ENCODE measurements at regions of chr17 and their contacts with region 1.

Region 1: GRCh38 chr17:3738562-3739295 is 15.0 kb downstream of the HASPIN start:
- DNase-seq: no peak

Region 2: DNA sequence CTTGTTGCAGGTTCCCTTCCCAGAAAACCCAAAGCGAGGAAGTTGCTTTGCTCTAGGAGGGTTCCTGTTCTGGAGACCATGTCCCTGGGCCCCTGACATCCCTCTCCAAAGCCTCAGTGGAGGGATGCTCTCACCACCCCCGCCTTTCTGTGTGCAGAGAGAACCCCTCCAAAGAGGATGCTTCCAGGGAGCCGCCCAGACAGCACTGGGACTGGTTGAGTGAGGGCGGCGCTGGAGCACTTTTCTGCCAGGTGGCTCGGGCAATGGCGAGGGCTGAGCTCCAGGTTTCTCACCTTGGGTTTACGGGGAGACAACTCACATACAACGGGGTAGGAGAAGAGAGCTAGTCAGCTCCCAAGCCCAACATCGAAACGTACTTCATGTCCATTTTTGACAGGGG is 62.8 kb before region 1 on chr17:
- CTCF ChIA-PET with region 1: no interaction called
- POLR2A ChIA-PET with region 1: no interaction called
- DNase-seq: no peak

Region 3: DNA sequence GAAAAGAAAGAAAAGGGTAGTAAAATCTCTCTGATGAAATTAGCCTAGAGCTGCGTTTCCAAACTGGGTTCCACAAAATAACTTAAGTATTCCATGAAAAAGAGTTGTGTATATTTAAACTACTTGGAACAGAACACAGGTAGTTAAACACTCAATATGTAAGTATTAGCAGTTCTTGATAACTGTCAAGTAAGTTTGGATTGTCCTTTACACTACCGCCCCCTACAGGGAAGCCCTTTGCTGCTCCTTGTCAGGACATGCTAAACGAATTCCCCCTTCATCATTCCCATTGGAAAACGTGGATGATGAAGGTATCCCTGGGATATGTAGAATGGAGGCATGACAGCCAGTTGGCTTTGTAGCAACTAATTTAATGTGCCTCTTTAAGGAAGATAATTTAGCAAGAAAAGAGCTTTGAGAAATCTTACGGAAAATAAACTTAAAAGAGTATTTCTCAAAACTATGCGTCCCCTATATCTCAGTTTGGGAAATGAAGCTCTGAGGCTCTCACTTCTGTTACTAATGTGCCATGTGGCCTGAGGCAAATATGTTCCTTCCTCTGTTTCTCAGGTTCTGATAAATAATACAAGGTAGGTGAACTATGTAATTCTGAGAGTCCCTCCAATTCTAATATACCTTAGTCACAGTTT is 88.5 kb after region 1 on chr17:
- CTCF ChIA-PET with region 1: interaction called, 30 read pairs
- POLR2A ChIA-PET with region 1: no interaction called
- DNase-seq: peak; percentile 59

Region 4: GRCh38 chr17:3845621-3846441 is 107.1 kb after region 1 on chr17 and contains the start of gene NCBP3:
- CTCF ChIA-PET with region 1: interaction called, 10 read pairs
- POLR2A ChIA-PET with region 1: interaction called, 4 read pairs
- DNase-seq: peak; percentile 98